BJ (cell line): ENCODE measurements at regions of chr20 and their contacts with region 1.

Region 1: DNA sequence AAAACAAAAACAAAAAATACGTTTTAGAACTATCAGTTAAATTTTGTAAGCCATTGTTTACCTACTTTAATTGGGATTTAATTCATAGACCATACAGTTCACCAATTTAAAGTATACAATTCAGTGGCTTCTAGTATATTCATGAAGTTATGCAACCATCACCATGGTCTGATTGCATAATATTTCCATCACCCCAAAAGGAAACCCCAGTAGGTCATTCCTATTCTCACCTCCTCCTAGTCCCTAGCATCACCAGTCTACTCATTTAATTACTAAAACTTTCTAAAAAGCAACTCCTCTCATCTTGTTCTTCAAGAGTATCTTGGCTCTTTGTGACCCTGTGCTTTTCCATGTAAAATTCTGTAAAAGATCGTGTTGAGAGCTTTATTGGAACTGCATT is 60.2 kb downstream of the ASXL1 start:
- DNase-seq: no peak
- H3K4me3 ChIP-seq: no peak overlapping the region
- H3K27me3 ChIP-seq: no peaks in the 10 kb centered on the region
- CTCF ChIP-seq: no peak

Region 2: GRCh38 chr20:31698803-31699718 is 719.3 kb before region 1 on chr20:
- CTCF ChIA-PET with region 1: no interaction called
- POLR2A ChIA-PET with region 1: interaction called, 13 read pairs
- DNase-seq: peak; percentile 91
- H3K4me3 ChIP-seq: no peak overlapping the region
- H3K27me3 ChIP-seq: no peaks in the 10 kb centered on the region
- CTCF ChIP-seq: no peak

Region 3: GRCh38 chr20:32168184-32168905 is 250.0 kb before region 1 on chr20:
- CTCF ChIA-PET with region 1: no interaction called
- POLR2A ChIA-PET with region 1: no interaction called
- DNase-seq: no peak
- H3K4me3 ChIP-seq: no peak overlapping the region
- H3K27me3 ChIP-seq: no peaks in the 10 kb centered on the region
- CTCF ChIP-seq: no peak

Region 4: DNA sequence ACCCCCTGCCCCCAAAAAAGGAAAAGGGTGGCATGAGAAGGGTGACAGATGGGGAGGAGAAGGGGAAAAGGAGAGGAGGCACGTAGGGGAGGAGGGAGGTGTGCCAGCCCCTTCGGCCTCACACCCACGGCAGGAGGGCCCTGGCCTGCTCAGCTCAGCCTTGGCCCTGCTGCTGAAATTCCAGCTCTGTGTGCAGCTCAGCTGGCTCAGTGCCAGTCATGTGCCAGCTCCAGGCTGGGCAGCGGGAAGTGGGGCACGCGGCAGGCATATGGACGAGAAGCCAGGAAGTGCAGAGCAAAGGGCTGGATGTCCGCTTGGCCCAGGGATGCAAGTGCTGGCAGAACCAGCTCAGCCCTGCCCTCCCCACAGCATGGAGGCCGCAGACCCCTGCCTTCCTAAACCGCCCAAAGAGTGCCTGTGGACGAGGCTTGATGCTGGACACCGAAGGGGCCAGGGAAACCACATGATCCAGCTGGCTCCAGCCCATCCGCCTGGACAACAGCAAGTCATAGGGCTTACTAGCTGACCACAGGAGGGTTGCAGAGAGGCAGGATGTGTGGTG is 106.5 kb after region 1 on chr20:
- CTCF ChIA-PET with region 1: no interaction called
- POLR2A ChIA-PET with region 1: no interaction called
- DNase-seq: no peak
- H3K4me3 ChIP-seq: no peak overlapping the region
- H3K27me3 ChIP-seq: peaks cover 2% of the 10 kb centered on the region
- CTCF ChIP-seq: no peak

Region 5: GRCh38 chr20:32560989-32561830 is 142.8 kb after region 1 on chr20:
- CTCF ChIA-PET with region 1: no interaction called
- POLR2A ChIA-PET with region 1: no interaction called
- DNase-seq: no peak
- H3K4me3 ChIP-seq: no peak overlapping the region
- H3K27me3 ChIP-seq: no peaks in the 10 kb centered on the region
- CTCF ChIP-seq: no peak